PC-9 (cell line): ENCODE measurements at regions of chr4 and their contacts with region 1.

Region 1: GRCh38 chr4:1939664-1940509 is 68.7 kb downstream of the NSD2 start:
- DNase-seq: peak; percentile 52 to 96
- H3K4me3 ChIP-seq: no peak overlapping the region
- H3K27ac ChIP-seq: peak overlapping the region; percentile 43
- H3K4me1 ChIP-seq: peaks cover 28% of the 10 kb centered on the region
- H3K27me3 ChIP-seq: no peaks in the 10 kb centered on the region
- CTCF ChIP-seq: no peak

Region 2: DNA sequence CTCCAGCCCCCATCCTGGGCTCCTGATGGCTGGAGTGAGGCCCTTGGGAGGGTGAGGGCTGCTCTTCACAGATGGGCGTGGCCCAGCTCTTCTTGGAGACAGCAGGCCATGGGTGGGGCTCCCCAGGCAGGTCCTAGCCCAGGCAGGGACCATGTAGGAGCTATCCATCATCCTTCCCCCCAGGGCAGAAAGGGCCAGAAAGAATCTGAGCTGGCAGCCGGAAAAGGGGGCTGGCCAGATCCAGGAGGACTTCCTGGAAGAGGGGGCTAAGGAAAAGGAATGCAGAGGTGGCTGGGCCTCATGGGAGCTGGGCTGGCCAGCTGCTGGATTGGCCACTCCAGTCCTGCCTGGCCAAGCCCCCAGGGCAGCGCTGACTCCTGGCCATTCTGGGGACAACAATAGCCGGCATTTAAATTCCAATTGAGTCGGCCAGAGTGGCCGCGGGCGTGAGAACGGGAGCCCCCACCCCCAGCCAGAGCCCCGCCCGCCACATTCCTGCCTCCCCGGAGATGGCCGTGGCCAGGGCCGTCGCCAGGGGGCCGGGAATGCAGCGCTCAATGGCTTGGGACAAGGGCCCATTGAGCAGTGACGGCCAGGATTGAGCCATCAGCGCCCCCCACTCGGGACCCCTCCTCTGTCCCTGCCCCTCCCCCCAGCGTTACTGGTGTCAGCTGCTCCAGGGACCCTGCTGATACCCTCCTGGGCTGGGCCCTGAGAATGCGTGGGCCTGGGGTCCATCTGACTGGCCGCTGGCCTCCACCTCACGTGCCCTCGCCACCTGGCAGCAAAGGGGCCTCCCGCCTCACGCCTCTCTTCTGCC is 161.9 kb before region 1 on chr4:
- CTCF ChIA-PET with region 1: no interaction called
- POLR2A ChIA-PET with region 1: no interaction called
- intact Hi-C with region 1: loop called (anchors 1 kb)
- DNase-seq: peak; percentile 86 to 95
- H3K4me3 ChIP-seq: no peak overlapping the region; the same call in 1 of the 2 replicates
- H3K27ac ChIP-seq: no peak overlapping the region
- H3K4me1 ChIP-seq: peaks cover 48% of the 10 kb centered on the region
- H3K27me3 ChIP-seq: no peaks in the 10 kb centered on the region
- CTCF ChIP-seq: no peak; the same call in 1 of the 2 replicates

Region 3: GRCh38 chr4:1997712-1998111 is 57.8 kb after region 1 on chr4:
- CTCF ChIA-PET with region 1: interaction called, 12 read pairs
- POLR2A ChIA-PET with region 1: no interaction called
- intact Hi-C with region 1: no loop called
- DNase-seq: no peak
- H3K4me3 ChIP-seq: peak overlapping the region; percentile 19; the same call in 1 of the 2 replicates
- H3K27ac ChIP-seq: peak overlapping the region; percentile 28; the same call in 1 of the 2 replicates
- H3K4me1 ChIP-seq: peaks cover 35% of the 10 kb centered on the region
- H3K27me3 ChIP-seq: no peaks in the 10 kb centered on the region
- CTCF ChIP-seq: no peak

Region 4: DNA sequence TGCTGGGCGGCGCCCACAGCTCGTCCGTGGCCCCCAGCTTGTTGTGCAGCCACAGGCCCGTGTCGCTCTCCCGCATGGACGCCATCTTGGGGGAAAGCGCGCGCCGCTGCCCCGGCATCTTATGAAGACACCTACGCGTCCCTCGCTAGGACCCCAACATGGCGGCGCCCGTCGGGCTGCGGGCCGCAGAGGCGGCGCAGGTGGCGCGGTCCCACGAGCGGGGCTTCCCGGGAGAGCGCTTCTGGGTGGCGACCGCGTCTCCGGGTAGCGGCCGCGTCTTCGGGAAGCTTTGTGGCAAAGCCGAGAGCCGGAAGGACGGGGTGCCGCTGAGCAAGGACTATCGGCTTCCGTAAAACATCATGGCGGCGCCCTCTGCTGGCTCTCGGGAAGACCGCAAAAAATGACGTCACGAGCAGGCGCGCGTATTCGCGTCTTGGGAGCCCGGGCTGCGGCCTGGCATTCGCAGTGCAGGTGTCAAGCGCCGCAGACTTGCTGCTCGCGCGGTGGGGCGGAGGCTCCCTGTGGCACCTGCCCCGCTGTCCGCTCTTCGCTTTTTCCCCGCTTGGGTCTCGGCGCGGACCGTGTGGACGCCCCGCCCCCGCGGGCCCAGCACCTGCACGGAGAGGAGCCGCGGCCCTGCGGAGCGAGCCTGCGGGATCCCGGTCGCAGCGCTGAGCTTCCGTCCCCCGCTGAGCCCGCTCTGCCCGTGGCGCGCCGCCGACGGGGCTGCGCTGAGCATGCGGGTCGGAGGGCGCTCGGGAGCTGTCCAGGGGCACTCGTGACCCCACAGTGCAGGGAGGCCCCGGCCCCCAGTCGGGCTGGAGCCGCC is 69.2 kb after region 1 on chr4 and contains the start of gene NELFA:
- CTCF ChIA-PET with region 1: no interaction called
- POLR2A ChIA-PET with region 1: no interaction called
- intact Hi-C with region 1: no loop called
- DNase-seq: peak; percentile 91 to 93
- H3K4me3 ChIP-seq: peak within 1 kb of the TSS; percentile 100
- H3K27ac ChIP-seq: peak within 1 kb of the TSS; percentile 97
- H3K4me1 ChIP-seq: peaks cover 17% of the 10 kb centered on the region
- H3K27me3 ChIP-seq: no peaks in the 10 kb centered on the region
- CTCF ChIP-seq: peak; percentile 71
- total RNA-seq, gene NELFA: 52.4 and 70.1 TPM in 2 replicates